ENCODE measurements at regions of chr5 and their contacts with region 1.

Region 1: DNA sequence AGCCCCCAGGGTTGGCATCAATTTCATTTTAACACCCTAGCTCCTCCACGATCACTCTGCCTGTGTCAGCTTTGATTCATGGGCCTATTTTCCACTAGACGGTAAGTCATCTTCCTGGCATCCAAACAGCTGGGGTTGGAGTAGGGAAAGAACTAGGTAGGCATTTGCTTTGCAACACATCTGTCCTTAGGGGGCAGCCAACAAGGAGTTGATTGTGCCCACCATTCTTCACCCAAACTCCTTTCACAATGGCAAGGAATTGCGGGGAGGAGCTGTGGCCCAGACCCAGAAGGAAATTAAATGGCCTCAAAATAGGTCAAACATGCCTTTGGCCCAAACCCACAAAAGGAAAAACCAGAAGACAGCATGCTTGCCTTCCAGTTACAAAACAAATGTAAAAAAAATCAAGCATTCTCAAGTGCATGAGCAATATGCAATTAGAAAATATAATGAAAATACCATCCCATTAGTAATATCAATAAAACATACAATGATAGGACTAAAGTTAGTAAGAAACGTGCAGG is 71.8 kb downstream of the NRG2 start:
- DNase-seq: no peak
- H3K4me3 ChIP-seq: no peak overlapping the region
- H3K27ac ChIP-seq: no peak overlapping the region
- H3K4me1 ChIP-seq: peaks cover 7 to 19% (median 10%) of the 10 kb centered on the region in 6 donors
- H3K27me3 ChIP-seq: peaks cover 0 to 16% (median 0%) of the 10 kb centered on the region in 7 donors
- CTCF ChIP-seq: no peak
- POLR2A ChIP-seq: no peak

Region 2: DNA sequence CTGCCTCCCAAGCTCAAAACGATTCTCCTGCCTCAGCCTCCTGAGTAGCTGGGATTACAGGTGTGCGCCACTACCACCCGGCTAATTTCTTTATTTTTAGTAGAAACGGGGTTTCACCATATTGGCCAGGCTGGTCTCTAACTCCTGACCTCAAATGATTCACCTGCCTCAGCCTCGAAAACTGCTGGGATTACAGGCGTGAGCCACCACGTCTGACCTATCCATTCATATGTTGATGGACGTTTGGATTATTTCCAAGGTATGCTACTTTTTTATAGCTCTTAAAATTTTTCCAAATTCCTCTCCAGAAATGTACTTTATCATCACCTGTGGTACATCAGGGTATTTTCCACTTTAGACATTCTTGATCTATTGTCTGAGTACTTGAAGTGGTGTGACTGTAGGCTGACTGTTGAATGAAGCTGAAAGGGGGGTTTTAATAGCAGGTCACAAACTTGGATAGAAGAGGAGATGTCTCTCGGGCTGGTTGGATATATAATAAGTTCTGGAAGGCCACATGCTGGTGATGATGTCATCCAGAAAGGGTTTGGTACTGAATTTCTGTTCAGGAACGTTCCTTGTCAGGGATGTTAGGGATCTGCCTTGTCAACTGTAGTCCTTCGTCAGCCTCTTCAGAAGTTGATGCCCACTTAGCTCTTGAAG is 1210.7 kb before region 1 on chr5:
- intact Hi-C with region 1: no loop called
- DNase-seq: no peak
- H3K4me3 ChIP-seq: no peak overlapping the region
- H3K27ac ChIP-seq: peak overlapping the region in 1 of 8 donors; percentile 9
- H3K4me1 ChIP-seq: peaks cover 0 to 66% (median 38%) of the 10 kb centered on the region in 6 donors
- H3K27me3 ChIP-seq: no peaks in the 10 kb centered on the region
- CTCF ChIP-seq: no peak
- POLR2A ChIP-seq: no peak

Region 3: DNA sequence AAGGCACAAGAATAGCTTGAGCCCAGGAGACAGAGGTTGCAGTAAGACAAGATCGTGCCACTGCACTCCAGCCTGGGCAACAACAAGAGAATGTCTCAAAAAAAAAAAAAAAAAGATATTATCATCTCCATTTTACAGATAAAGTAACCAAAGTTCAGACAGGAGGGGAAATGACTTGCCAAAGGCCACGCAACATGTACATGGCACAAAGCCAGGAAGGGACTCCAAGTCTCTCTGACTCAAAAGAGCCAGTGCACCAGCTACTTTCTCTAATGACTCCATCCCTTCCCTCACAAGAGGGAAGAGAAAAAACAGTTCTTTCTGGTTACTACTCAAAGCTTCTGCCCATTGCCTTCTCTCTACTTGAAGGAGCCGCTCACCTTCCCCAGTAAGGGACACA is 807.2 kb before region 1 on chr5:
- intact Hi-C with region 1: no loop called
- DNase-seq: no peak
- H3K4me3 ChIP-seq: no peak overlapping the region
- H3K27ac ChIP-seq: no peak overlapping the region
- H3K4me1 ChIP-seq: peaks cover 0 to 23% (median 2%) of the 10 kb centered on the region in 6 donors
- H3K27me3 ChIP-seq: no peaks in the 10 kb centered on the region
- CTCF ChIP-seq: no peak
- POLR2A ChIP-seq: no peak

Region 4: DNA sequence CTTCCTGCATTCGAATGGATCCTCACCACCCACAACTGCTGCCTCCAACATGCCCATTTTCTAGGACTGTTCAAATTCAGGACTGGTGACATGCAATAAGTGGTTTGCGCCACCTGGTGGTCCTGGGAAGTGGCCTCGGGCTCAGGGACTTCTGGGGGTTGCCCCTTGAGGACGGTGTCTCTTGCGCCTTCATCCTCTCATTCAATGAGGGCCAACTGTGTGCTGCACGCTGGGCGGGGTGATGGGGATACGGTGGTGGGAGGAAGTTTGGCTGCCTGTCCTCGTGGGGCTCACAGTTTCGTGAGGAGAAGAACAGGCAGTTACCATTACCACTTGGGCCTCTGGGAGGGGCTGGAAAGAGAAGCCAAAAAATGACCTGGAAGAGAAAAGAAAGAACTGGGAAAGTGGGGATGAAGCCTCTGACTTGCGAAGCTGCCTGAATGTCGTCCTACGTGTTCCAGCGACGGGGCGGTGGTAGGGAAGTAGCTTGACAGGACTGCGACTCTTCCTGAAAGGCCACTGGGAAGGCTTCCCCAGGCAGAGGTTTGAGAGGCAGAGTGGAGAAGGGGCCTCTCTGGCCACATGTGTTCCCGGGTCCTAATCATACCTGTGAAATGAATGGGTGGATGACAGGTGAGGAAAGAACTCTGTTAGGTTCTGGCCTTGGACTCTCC is 126.7 kb before region 1 on chr5:
- intact Hi-C with region 1: loop called (anchors 2 kb)
- DNase-seq: peak; percentile 90
- H3K4me3 ChIP-seq: no peak overlapping the region
- H3K27ac ChIP-seq: no peak overlapping the region
- H3K4me1 ChIP-seq: peaks cover 0 to 38% (median 20%) of the 10 kb centered on the region in 6 donors
- H3K27me3 ChIP-seq: peaks cover 0 to 34% (median 0%) of the 10 kb centered on the region in 7 donors
- CTCF ChIP-seq: peak; percentile 59 to 85 (median 73)
- POLR2A ChIP-seq: no peak

Region 5: GRCh38 chr5:140103154-140103553 is 131.9 kb after region 1 on chr5:
- intact Hi-C with region 1: no loop called
- DNase-seq: no peak
- H3K4me3 ChIP-seq: no peak overlapping the region
- H3K27ac ChIP-seq: no peak overlapping the region
- H3K4me1 ChIP-seq: peaks cover 9 to 22% (median 12%) of the 10 kb centered on the region in 6 donors
- H3K27me3 ChIP-seq: peaks cover 0 to 1% (median 0%) of the 10 kb centered on the region in 7 donors
- CTCF ChIP-seq: no peak
- POLR2A ChIP-seq: no peak